Posterior vena cava (tissue), 2 donors: ENCODE measurements at regions of chr16 and their contacts with region 1.

Region 1: GRCh38 chr16:11155284-11155806 is 100.7 kb downstream of the SOCS1 start:
- DNase-seq: no peak

Region 2: GRCh38 chr16:10791048-10791447 is 364.3 kb before region 1 on chr16:
- intact Hi-C with region 1: loop called in 1 of 2 experiments (anchors 10 kb)
- DNase-seq: no peak

Region 3: GRCh38 chr16:11105038-11105903 is 50.1 kb before region 1 on chr16:
- intact Hi-C with region 1: no loop called
- DNase-seq: no peak

Region 4: DNA sequence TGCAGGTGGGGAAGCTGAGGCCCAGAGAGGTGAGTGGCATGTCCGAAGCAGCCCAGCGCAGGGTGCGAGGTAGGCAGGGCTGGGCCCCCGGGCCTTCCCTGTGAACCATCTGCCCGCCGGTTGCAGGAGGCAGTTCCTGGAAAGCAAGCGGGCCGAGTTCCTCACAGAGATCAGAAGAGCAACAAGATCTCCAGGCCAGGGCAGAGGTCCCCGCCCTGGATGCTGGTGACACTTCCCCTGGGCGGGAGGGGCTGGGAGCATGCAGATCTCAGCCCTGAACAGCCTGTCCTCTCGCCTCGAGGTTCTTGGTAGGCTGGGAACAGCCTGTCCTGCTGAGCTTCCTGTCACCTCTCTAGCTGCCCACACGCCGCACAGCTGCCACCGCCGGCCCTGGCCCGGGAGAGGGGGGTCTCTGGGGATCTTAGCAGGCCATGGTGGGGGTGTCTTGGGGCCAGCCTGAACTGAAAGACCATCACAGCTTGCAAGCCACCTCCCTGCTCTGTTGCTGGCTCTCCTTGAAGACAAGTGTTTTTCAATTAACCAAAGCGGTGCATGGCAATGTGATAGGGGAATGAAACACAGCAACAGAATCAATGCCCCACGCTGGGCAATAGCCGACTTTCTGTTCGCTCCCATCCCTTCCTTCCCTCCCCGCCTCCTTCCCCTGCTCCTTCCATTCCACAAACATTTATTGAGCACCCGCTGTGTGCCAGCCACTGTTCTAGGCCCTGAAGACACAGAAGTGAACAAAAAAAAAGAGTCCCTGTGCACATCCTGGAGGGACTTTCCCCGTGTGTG is 69.0 kb after region 1 on chr16:
- intact Hi-C with region 1: no loop called
- DNase-seq: peak; percentile 93